Lower leg skin (tissue), 4 donors: ENCODE measurements at regions of chr6 and their contacts with region 1.

Region 1: DNA sequence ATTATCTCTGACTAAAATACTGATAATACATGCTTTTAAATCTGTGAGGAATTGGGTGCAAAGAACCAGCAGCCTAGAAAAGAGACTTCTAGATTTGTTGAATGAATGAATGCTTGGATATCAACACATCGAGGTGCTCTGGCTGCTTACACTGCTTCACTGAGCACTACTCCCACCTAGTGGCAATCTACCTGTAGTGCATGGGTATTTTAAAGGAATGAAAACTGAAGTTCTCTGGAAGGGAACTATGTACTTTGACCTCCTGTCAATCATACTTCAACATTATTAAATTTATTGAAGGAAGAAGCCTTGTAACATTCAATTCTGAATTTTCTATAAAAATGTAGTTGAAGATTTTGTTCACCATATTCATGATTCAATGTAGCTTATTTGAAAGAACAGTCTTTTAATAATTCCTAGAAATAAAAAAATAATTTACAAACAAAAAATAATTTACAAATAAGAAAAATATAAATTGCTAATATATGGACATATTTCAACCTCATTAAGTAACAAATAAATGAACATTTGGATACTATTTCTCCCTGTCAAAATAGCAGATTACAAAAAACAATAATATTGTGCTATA is 111.2 kb upstream of the MMS22L start:
- DNase-seq: peak in 1 of 2 donors; percentile 37
- H3K4me3 ChIP-seq: no peak overlapping the region
- CTCF ChIP-seq: peak in 1 of 3 donors; percentile 45
- POLR2A ChIP-seq: no peak

Region 2: GRCh38 chr6:97186416-97186999 is 207.7 kb before region 1 on chr6:
- intact Hi-C with region 1: loop called (anchors 5 kb)
- DNase-seq: peak in 1 of 2 donors; percentile 29
- H3K4me3 ChIP-seq: no peak overlapping the region
- CTCF ChIP-seq: no peak
- POLR2A ChIP-seq: no peak